Activated B cell treated with CpG ODN at 0.5 μM for 24 hours (primary cell): ENCODE measurements at regions of chr9 and their contacts with region 1.

Region 1: GRCh38 chr9:98087420-98088354 is 31.2 kb downstream of the NANS start:
- DNase-seq: peak; percentile 74
- ATAC-seq: peak; percentile 84
- H3K4me3 Mint-ChIP-seq: peak overlapping the region; percentile 74
- H3K27ac Mint-ChIP-seq: peak overlapping the region; percentile 50
- H3K4me1 Mint-ChIP-seq: peaks cover 25% of the 10 kb centered on the region
- H3K27me3 Mint-ChIP-seq: no peaks in the 10 kb centered on the region
- CTCF ChIP-seq: no peak

Region 2: GRCh38 chr9:98101868-98102273 is 14.2 kb after region 1 on chr9:
- CTCF ChIA-PET with region 1: no interaction called
- POLR2A ChIA-PET with region 1: no interaction called
- intact Hi-C with region 1: loop called (anchors 1 kb)
- DNase-seq: peak; percentile 32
- ATAC-seq: peak; percentile 95
- H3K4me3 Mint-ChIP-seq: peak overlapping the region; percentile 42
- H3K27ac Mint-ChIP-seq: peak overlapping the region; percentile 84
- H3K4me1 Mint-ChIP-seq: peaks cover 87% of the 10 kb centered on the region
- H3K27me3 Mint-ChIP-seq: no peaks in the 10 kb centered on the region
- CTCF ChIP-seq: no peak